Right ventricle myocardium inferior (tissue), 1 donor: ENCODE measurements at regions of chr3 and their contacts with region 1.

Region 1: GRCh38 chr3:39189959-39190269 is 2.5 kb downstream of the XIRP1 start:
- DNase-seq: no peak
- ATAC-seq: peak; percentile 51

Region 2: DNA sequence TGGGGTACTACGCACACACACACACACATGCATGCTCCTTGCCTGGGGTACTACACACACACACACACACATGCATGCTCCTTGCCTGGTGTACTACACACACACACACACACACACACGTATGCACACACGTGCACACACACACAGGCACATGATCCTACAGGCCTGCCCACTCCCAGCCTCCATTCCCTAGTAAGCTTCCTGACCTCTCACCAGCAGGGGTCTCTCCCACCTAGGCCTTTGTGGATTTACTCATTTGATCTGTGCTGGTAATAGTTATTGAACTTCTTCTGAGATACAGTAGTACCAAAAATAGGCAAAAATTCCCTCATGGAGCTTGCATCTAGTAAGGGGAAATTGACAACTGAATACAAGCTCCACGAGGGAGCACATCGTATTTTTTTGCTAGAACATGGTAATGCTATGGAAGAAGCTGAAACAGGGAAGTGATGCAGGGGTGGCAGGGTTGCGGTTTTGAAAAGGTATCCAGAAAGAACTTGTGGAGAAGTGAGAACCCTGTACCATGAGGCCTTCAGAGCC is 63.3 kb before region 1 on chr3:
- intact Hi-C with region 1: loop called (anchors 5 kb)
- DNase-seq: no peak
- ATAC-seq: no peak